CD8-positive, alpha-beta T cell (primary cell): ENCODE measurements at regions of chr10 and their contacts with region 1.

Region 1: DNA sequence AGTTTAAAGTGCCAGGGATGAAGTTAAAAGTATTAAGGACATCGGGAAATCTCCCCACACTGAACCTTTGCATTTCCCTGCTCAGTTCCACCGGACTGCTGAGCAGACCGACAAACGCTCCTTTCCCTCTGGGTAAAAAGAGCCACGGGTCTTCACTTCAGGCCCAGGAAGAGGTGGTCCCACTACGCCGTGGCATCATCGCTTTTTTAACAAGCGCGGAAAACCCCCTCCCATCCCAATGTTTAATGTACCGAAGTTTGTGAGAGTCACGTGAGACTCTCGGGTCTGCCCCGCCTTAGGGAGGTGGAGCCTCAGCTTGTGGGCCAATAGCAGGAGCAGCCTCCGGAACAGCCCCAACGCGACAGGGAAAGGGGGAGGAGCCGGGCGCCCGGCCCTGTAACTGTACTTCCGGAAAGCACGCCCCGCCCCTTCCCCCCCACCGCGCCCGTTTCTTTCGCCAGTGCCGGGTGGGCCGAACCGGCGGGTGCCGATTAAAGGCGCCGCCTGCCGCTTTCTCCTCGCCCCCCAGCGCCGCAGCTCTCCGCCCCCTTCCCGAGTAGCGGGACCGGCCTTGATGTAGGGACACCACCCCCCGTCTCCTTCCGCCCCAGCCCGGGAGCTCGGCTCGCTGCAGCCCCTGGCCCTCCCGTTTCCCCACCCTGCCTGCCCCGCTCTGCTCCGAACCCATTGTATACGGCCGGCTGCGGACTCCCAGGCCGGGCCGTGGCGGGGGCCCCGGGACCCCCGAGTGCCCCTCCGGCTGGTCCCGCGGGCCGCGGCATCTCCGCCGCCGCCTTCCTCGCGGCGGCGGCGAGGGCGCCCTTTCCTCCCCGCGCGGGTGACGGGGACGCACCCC is 2.2 kb upstream of the TRIM8 start:
- DNase-seq: peak; percentile 94 to 99 (median 98)
- ATAC-seq: peak; percentile 69
- H3K4me3 ChIP-seq: peak overlapping the region; percentile 67 to 81
- H3K4me3 Mint-ChIP-seq: peak overlapping the region; percentile 91
- H3K27ac ChIP-seq: peak overlapping the region; percentile 71 to 94
- H3K27ac Mint-ChIP-seq: peak overlapping the region; percentile 96
- H3K4me1 ChIP-seq: peaks cover 12% of the 10 kb centered on the region
- H3K4me1 Mint-ChIP-seq: peaks cover 26% of the 10 kb centered on the region
- H3K27me3 ChIP-seq: no peaks in the 10 kb centered on the region
- H3K27me3 Mint-ChIP-seq: no peaks in the 10 kb centered on the region
- CTCF ChIP-seq: no peak

Region 2: DNA sequence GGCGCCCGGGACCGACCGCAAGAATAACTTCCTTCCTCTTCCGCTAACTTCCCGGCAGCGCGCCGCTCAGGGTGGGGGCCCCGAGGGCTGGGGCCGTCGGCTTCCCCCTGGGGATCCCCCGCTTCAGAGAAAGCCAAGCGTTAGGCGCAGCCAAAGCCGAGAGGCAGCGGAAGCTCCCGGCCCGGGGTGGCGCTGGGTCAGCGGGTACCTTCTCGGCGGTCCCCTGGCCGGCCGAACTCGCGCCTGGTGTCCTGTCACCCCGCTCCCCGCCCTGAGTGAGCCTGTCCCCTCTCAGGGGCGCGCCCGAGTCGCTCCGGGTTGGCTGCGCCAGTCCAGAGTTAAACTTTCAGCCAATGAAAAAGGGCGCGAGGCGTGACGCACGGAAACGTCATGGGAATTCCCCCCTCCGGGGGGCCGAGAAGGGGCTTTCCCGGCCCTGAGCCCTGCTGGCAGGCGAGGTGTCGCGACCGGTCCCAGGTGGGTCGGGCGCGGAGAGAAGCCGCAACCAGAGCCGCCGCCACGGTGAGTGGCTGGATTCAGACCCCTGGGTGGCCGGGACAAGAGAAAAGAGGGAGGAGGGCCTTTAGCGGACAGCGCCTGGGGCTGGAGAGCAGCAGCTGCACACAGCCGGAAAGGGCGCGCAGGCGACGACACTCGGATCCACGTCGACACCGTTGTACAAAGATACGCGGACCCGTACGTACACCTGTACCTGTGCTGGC is 247.9 kb before region 1 on chr10:
- CTCF ChIA-PET with region 1: no interaction called
- POLR2A ChIA-PET with region 1: no interaction called
- intact Hi-C with region 1: loop called (anchors 1 to 10 kb)
- DNase-seq: peak; percentile 95 to 99 (median 98)
- ATAC-seq: peak; percentile 74
- H3K4me3 ChIP-seq: peak overlapping the region; percentile 89 to 95
- H3K4me3 Mint-ChIP-seq: peak overlapping the region; percentile 90
- H3K27ac ChIP-seq: peak overlapping the region; percentile 99 to 100
- H3K27ac Mint-ChIP-seq: peak overlapping the region; percentile 98
- H3K4me1 ChIP-seq: peaks cover 24% of the 10 kb centered on the region
- H3K4me1 Mint-ChIP-seq: peaks cover 37% of the 10 kb centered on the region
- H3K27me3 ChIP-seq: no peaks in the 10 kb centered on the region
- H3K27me3 Mint-ChIP-seq: no peaks in the 10 kb centered on the region
- CTCF ChIP-seq: no peak

Region 3: GRCh38 chr10:102615361-102615760 is 26.7 kb before region 1 on chr10:
- CTCF ChIA-PET with region 1: interaction called, 6 read pairs
- POLR2A ChIA-PET with region 1: interaction called, 16 read pairs
- intact Hi-C with region 1: loop called (anchors 1 to 2 kb)
- DNase-seq: peak in 4 of 9 experiments; percentile 21 to 46 (median 36)
- ATAC-seq: no peak
- H3K4me3 ChIP-seq: no peak overlapping the region
- H3K4me3 Mint-ChIP-seq: no peak overlapping the region
- H3K27ac ChIP-seq: no peak overlapping the region
- H3K27ac Mint-ChIP-seq: no peak overlapping the region
- H3K4me1 ChIP-seq: peaks cover 29% of the 10 kb centered on the region
- H3K4me1 Mint-ChIP-seq: peaks cover 31% of the 10 kb centered on the region
- H3K27me3 ChIP-seq: no peaks in the 10 kb centered on the region
- H3K27me3 Mint-ChIP-seq: no peaks in the 10 kb centered on the region
- CTCF ChIP-seq: no peak

Region 4: GRCh38 chr10:102673819-102674511 is 31.9 kb after region 1 on chr10:
- CTCF ChIA-PET with region 1: interaction called, 27 read pairs
- POLR2A ChIA-PET with region 1: interaction called, 49 read pairs
- intact Hi-C with region 1: loop called in 1 of 2 experiments (anchors 1 kb)
- DNase-seq: peak; percentile 33 to 92 (median 72)
- ATAC-seq: peak; percentile 88
- H3K4me3 ChIP-seq: peak overlapping the region; percentile 32 to 47
- H3K4me3 Mint-ChIP-seq: peak overlapping the region; percentile 78
- H3K27ac ChIP-seq: peak overlapping the region; percentile 58 to 68
- H3K27ac Mint-ChIP-seq: peak overlapping the region; percentile 86
- H3K4me1 ChIP-seq: peaks cover 41% of the 10 kb centered on the region
- H3K4me1 Mint-ChIP-seq: peaks cover 58% of the 10 kb centered on the region
- H3K27me3 ChIP-seq: no peaks in the 10 kb centered on the region
- H3K27me3 Mint-ChIP-seq: no peaks in the 10 kb centered on the region
- CTCF ChIP-seq: no peak

Region 5: DNA sequence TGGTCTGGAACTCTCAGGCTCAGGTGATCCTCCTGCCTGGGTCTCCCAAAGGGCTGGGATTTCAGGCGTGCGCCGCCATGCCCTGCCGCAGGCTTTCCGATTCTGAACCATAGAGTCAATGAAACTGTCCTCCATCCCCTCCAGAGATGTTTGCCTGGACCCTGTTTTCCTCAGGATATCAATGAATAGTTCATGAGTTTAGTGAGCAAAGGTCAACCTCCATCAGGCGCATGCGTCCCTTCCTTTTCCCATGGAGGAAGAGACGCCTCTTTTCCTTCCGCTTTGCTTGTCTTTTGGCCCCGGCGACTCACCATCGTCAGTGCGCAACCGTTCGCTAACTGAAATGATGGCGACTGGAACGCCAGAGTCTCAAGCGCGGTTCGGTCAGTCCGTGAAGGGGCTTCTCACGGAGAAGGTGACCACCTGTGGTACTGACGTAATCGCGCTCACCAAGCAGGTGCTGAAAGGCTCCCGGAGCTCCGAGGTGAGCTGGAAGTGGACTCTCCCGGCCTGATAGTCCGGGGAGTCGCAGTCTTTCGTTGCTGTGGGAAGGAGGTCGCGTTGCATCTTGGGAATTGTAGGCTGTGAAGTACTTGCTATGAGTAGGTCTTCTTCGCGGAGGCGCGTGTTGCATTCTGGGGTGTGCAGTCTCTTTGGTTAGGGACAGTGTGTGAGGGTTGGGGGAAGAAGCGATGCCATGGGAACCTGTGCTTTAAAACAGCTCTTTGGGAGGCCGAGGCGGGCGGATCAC is 212.0 kb after region 1 on chr10 and contains the start of gene BORCS7:
- CTCF ChIA-PET with region 1: no interaction called
- POLR2A ChIA-PET with region 1: no interaction called
- intact Hi-C with region 1: loop called in 1 of 2 experiments (anchors 5 kb)
- DNase-seq: peak; percentile 68 to 95 (median 87)
- ATAC-seq: peak; percentile 99
- H3K4me3 ChIP-seq: peak within 1 kb of the TSS; percentile 99
- H3K4me3 Mint-ChIP-seq: peak within 1 kb of the TSS; percentile 99
- H3K27ac ChIP-seq: peak within 1 kb of the TSS; percentile 90 to 98
- H3K27ac Mint-ChIP-seq: peak within 1 kb of the TSS; percentile 99
- H3K4me1 ChIP-seq: peaks cover 5% of the 10 kb centered on the region
- H3K4me1 Mint-ChIP-seq: peaks cover 17% of the 10 kb centered on the region
- H3K27me3 ChIP-seq: no peaks in the 10 kb centered on the region
- H3K27me3 Mint-ChIP-seq: no peaks in the 10 kb centered on the region
- CTCF ChIP-seq: no peak
- total RNA-seq, gene BORCS7: 13.7 to 13.9 TPM